ENCODE measurements at regions of chr12 and their contacts with region 1.

Region 1: DNA sequence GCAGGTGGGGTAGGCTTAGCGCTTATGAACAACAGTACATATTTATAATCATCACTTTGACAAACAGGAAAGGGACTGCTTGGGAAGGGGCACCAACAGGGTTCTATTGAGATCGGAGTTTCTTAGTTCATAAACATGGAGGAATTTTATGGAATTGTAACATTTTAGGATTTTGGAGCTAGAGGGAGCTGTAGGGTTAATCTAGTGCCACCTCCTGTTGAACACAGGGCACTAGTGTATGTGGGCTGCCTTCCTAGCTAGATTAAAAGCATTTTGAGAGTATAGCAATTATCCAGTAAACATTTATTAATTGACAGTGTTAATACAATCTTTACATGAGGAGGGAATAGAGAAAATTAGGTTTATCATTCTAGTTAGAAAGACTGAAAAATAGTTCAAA is 23.1 kb upstream of the TBC1D30 start:
- DNase-seq: no peak
- CTCF ChIP-seq: peak; percentile 24

Region 2: GRCh38 chr12:64596252-64596793 is 205.1 kb before region 1 on chr12:
- CTCF ChIA-PET with region 1: no interaction called
- POLR2A ChIA-PET with region 1: no interaction called
- DNase-seq: no peak
- CTCF ChIP-seq: no peak

Region 3: GRCh38 chr12:64814432-64814831 is 13.1 kb after region 1 on chr12:
- CTCF ChIA-PET with region 1: interaction called, 33 read pairs
- POLR2A ChIA-PET with region 1: no interaction called
- DNase-seq: no peak
- CTCF ChIP-seq: no peak

Region 4: DNA sequence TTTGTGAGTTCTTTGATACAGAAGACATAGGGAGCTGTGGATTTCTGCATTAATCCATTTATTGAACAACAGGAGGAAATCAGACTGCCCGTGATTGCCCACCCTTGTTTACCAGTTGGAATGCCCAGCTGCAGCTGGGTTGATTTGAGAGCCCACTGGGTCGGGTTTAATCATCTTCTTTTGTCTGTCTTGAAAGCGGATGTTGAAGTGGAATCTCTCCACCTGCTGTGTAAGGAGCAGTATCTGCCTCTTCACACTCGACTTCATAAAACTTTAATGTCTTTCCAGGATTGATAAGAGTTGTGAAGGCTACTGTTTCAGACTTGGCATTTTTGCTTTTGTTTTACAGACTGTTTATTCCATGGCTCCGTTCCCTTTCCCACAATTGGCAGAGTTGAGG is 62.9 kb after region 1 on chr12:
- CTCF ChIA-PET with region 1: interaction called, 12 read pairs
- POLR2A ChIA-PET with region 1: no interaction called
- DNase-seq: no peak
- CTCF ChIP-seq: no peak

Region 5: GRCh38 chr12:64890873-64891468 is 89.6 kb after region 1 on chr12:
- CTCF ChIA-PET with region 1: interaction called, 16 read pairs
- POLR2A ChIA-PET with region 1: interaction called, 4 read pairs
- DNase-seq: peak; percentile 48
- CTCF ChIP-seq: peak; percentile 62

Region 6: GRCh38 chr12:65121049-65121955 is 319.9 kb after region 1 on chr12 and contains the start of gene WIF1:
- CTCF ChIA-PET with region 1: interaction called, 39 read pairs
- POLR2A ChIA-PET with region 1: no interaction called
- DNase-seq: peak; percentile 38
- CTCF ChIP-seq: peak; percentile 45

Measured in GM10248 (cell line).